ENCODE measurements at regions of chr5 and their contacts with region 1.

Region 1: GRCh38 chr5:35785601-35786085 is 71.0 kb upstream of the IL7R start:
- DNase-seq: peak; percentile 81
- H3K4me3 Mint-ChIP-seq: peak overlapping the region; percentile 46
- H3K27ac Mint-ChIP-seq: peak overlapping the region; percentile 84
- H3K4me1 Mint-ChIP-seq: peaks cover 66% of the 10 kb centered on the region
- H3K27me3 Mint-ChIP-seq: no peaks in the 10 kb centered on the region

Region 2: DNA sequence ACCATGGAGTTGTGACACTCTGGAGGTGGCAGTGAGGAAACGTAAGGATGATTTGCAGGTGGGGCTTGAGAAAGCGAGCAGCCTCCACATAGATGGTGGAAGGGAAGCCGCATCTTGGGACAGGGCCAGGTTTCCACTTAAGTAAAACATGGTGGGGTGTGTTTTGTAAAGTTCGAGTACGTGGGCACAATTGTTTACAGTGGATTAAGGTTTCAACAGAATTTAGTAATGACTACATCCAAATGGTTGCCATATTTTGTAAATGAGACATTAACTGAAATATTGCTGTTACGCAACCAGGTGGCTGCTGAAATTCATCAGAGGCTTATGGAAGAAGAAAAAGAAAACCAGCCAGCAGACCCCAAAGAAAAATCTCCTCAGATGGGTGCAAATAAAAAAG is 14.3 kb before region 1 on chr5:
- intact Hi-C with region 1: loop called (anchors 1 kb)
- DNase-seq: peak; percentile 40
- H3K4me3 Mint-ChIP-seq: no peak overlapping the region
- H3K27ac Mint-ChIP-seq: no peak overlapping the region
- H3K4me1 Mint-ChIP-seq: peaks cover 20% of the 10 kb centered on the region
- H3K27me3 Mint-ChIP-seq: no peaks in the 10 kb centered on the region

Region 3: DNA sequence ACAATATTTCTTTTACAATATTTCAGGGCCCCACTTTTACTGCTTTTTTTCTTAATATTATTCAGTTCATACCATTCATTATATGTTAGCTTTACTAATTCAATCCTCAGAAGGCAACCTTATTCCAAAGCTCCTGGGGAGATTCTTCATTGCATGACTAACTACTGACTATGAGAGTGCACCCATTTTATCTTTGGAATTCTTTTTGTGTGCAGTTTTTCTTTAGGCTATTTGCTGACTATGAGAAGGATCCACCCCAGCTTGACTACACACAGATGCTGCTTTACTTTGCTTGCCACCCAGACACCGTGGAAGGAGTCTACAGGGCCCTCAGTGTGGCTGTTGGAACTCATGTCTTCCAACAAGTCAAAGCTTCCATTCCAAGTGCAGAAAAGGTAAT is 14.1 kb after region 1 on chr5:
- intact Hi-C with region 1: loop called (anchors 1 kb)
- DNase-seq: peak; percentile 49
- H3K4me3 Mint-ChIP-seq: no peak overlapping the region
- H3K27ac Mint-ChIP-seq: no peak overlapping the region
- H3K4me1 Mint-ChIP-seq: peaks cover 55% of the 10 kb centered on the region
- H3K27me3 Mint-ChIP-seq: no peaks in the 10 kb centered on the region

Region 4: GRCh38 chr5:35828082-35828598 is 42.5 kb after region 1 on chr5:
- intact Hi-C with region 1: loop called (anchors 1 kb)
- DNase-seq: peak; percentile 61
- H3K4me3 Mint-ChIP-seq: peak overlapping the region; percentile 34
- H3K27ac Mint-ChIP-seq: peak overlapping the region; percentile 98
- H3K4me1 Mint-ChIP-seq: peaks cover 80% of the 10 kb centered on the region
- H3K27me3 Mint-ChIP-seq: no peaks in the 10 kb centered on the region